Activated CD4-positive, alpha-beta T cell treated with anti-CD3 and anti-CD28 coated beads, Interleukin-2, amount 10 ng/mL, durations not matched to agents 24 days and 14 days (primary cell): ENCODE measurements at regions of chr1 and their contacts with region 1.

Region 1: GRCh38 chr1:186722711-186723309 is 42.6 kb upstream of the PTGS2 start:
- DNase-seq: peak; percentile 76
- H3K4me3 Mint-ChIP-seq: no peak overlapping the region
- H3K27ac Mint-ChIP-seq: no peak overlapping the region
- H3K4me1 Mint-ChIP-seq: no peaks in the 10 kb centered on the region
- H3K27me3 Mint-ChIP-seq: peaks cover 14% of the 10 kb centered on the region

Region 2: GRCh38 chr1:186738926-186739325 is 16.1 kb after region 1 on chr1:
- intact Hi-C with region 1: no loop called
- DNase-seq: peak; percentile 69
- H3K4me3 Mint-ChIP-seq: peak overlapping the region; percentile 46
- H3K27ac Mint-ChIP-seq: peak overlapping the region; percentile 35
- H3K4me1 Mint-ChIP-seq: peaks cover 27% of the 10 kb centered on the region
- H3K27me3 Mint-ChIP-seq: no peaks in the 10 kb centered on the region

Region 3: DNA sequence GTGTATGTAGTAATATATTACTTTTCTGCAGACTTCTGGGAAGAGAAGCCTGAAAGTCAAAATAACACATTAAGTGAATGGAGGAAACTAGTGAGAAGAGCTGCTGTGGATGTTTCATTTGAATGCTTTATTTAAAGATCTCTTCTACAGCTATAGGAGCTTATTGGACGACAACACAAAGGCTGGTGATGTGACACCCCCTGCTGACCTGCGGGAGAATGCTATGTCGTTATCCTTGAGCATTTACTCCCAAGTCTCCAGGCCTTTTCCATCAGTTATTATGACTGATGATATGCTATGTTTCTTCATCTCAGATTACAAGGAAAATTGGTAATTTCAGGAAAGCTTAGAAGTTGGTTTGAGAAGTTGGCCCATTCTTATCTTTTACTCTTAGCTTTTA is 83.7 kb after region 1 on chr1:
- intact Hi-C with region 1: loop called (anchors 5 kb)
- DNase-seq: no peak
- H3K4me3 Mint-ChIP-seq: no peak overlapping the region
- H3K27ac Mint-ChIP-seq: no peak overlapping the region
- H3K4me1 Mint-ChIP-seq: no peaks in the 10 kb centered on the region
- H3K27me3 Mint-ChIP-seq: peaks cover 5% of the 10 kb centered on the region